ENCODE measurements at regions of chr9 and their contacts with region 1.

Region 1: DNA sequence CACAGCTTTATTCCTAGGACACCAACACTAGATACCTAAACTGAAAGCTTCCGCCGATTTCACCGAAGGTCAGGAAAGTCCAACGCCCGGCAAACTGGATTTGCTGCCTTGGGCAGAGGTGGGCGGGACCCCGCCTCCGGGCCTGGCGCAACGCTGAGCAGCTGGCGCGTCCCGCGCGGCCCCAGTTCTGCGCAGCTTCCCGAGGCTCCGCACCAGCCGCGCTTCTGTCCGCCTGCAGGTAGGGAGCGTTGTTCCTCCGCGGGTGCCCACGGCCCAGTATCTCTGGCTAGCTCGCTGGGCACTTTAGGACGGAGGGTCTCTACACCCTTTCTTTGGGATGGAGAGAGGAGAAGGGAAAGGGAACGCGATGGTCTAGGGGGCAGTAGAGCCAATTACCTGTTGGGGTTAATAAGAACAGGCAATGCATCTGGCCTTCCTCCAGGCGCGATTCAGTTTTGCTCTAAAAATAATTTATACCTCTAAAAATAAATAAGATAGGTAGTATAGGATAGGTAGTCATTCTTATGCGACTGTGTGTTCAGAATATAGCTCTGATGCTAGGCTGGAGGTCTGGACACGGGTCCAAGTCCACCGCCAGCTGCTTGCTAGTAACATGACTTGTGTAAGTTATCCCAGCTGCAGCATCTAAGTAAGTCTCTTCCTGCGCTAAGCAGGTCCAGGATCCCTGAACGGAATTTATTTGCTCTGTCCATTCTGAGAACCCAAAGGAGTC is at the start of gene CD274:
- DNase-seq: peak; percentile 94
- ATAC-seq: peak; percentile 99
- total RNA-seq, gene CD274: 7.3 to 12.4 TPM

Region 2: GRCh38 chr9:5479994-5480694 is 29.6 kb after region 1 on chr9:
- intact Hi-C with region 1: no loop called
- DNase-seq: no peak
- ATAC-seq: no peak

Region 3: GRCh38 chr9:5499889-5500398 is 49.4 kb after region 1 on chr9:
- intact Hi-C with region 1: loop called in 1 of 2 experiments (anchors 5 kb)
- DNase-seq: peak; percentile 59
- ATAC-seq: peak; percentile 25 to 65

Region 4: GRCh38 chr9:5593904-5594303 is 143.4 kb after region 1 on chr9:
- intact Hi-C with region 1: loop called (anchors 2 to 5 kb)
- DNase-seq: no peak
- ATAC-seq: no peak